ENCODE measurements at regions of chr18 and their contacts with region 1.

Region 1: GRCh38 chr18:33611525-33612135 is 33.6 kb downstream of the ASXL3 start:
- DNase-seq: no peak
- H3K4me3 Mint-ChIP-seq: no peak overlapping the region
- H3K27ac Mint-ChIP-seq: no peak overlapping the region
- H3K4me1 Mint-ChIP-seq: no peaks in the 10 kb centered on the region
- H3K27me3 Mint-ChIP-seq: no peaks in the 10 kb centered on the region
- CTCF ChIP-seq: no peak

Region 2: GRCh38 chr18:33350256-33350655 is 261.4 kb before region 1 on chr18:
- CTCF ChIA-PET with region 1: no interaction called
- intact Hi-C with region 1: no loop called
- DNase-seq: no peak
- H3K4me3 Mint-ChIP-seq: no peak overlapping the region
- H3K27ac Mint-ChIP-seq: no peak overlapping the region
- H3K4me1 Mint-ChIP-seq: peaks cover 4% of the 10 kb centered on the region
- H3K27me3 Mint-ChIP-seq: no peaks in the 10 kb centered on the region
- CTCF ChIP-seq: no peak

Region 3: DNA sequence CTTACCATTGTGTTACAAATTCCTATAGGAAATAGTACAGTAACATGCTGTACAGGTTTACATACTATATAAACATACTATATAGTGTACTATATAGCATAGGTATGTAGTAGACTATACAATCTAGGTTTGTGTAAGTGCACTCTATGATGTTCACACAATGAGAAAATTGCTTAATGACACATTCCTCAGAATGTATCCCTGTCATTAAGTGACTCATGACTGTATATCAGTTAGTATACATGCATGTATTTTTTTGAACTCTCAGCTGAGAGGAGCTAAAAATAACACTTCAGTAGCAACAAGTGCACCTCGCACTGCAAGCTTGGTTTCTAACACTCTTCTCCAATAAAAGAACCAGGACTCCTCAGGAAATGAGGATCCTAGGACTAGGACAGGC is 53.1 kb before region 1 on chr18:
- CTCF ChIA-PET with region 1: no interaction called
- intact Hi-C with region 1: loop called (anchors 10 kb)
- DNase-seq: no peak
- H3K4me3 Mint-ChIP-seq: no peak overlapping the region
- H3K27ac Mint-ChIP-seq: no peak overlapping the region
- H3K4me1 Mint-ChIP-seq: no peaks in the 10 kb centered on the region
- H3K27me3 Mint-ChIP-seq: no peaks in the 10 kb centered on the region
- CTCF ChIP-seq: no peak

Measured in Calu3 (cell line).